Ascending aorta (tissue), 2 donors: ENCODE measurements at regions of chr18 and their contacts with region 1.

Region 1: DNA sequence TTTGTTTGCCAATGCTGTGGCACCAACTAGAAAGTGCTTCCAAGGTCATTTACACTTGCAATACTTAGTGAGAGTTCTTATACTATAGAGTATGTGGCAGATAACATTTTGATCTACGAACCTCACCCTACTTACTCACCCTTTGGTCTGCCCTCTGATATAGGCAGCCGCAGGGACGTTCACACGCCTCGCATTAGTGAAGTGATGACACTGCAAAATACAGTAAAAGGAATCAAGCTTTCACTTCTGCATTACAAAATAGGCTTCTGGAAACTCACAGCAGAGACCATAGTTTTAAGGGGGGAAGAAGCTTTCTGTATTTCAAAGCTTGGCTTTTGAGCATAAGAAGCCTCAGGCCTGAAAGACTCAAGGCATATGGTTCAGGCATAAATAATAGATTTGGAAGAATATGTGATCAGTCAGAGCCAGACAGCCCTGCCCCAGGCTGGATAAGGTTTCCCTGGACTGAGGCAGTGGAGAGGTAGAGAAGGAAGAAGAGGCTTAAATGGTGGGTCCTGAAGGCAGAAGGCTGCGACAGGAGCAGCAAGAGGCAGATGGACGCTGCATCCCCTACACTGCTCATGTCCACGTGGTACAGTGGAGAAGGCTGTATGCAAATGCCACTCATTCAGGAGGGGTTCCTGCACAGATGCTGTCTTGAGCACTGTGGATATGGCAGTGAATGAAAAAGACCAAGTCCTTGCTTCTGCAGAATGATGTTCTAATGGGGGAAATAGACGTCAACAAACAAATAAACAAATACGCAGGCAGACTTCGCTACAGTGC is 63.1 kb downstream of the FECH start:
- DNase-seq: no peak
- H3K4me3 ChIP-seq: no peak overlapping the region
- H3K27ac ChIP-seq: no peak overlapping the region
- H3K4me1 ChIP-seq: no peaks in the 10 kb centered on the region
- H3K27me3 ChIP-seq: no peaks in the 10 kb centered on the region
- CTCF ChIP-seq: no peak

Region 2: GRCh38 chr18:57121542-57122112 is 401.7 kb before region 1 on chr18:
- intact Hi-C with region 1: no loop called
- DNase-seq: no peak
- H3K4me3 ChIP-seq: no peak overlapping the region
- H3K27ac ChIP-seq: no peak overlapping the region
- H3K4me1 ChIP-seq: no peaks in the 10 kb centered on the region
- H3K27me3 ChIP-seq: no peaks in the 10 kb centered on the region
- CTCF ChIP-seq: no peak

Region 3: DNA sequence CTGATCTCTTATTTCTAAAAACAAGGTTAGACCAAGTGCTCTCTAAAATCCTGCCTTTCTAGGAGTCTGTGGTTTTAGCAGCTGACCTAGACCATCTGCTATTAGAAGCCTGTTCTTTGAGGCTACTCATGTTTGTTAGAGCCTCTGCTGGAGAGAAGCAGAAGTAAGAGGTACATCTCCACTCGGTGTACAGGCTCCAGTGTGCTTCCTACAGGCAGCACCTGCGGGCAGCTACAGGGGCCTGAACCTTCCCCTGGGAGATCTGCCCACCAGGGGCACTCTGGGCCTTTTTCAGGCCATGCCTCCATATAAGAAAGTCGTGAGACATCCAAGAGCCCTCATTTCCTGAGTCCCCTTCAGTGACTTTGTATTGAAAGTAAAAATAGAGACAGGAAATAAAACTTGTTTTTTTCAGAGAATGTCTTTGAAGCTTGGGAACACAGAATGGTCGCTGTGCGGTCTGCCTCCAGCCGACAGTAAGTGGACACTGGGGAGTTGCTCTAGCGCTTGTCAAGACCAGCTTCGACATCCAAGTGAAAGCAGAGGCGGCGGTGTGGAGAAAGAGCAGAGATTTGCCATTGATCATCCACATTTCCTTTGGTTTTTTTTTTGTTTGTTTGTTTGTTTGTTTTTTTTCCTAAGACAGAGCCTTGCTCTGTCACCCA is 56.5 kb before region 1 on chr18:
- intact Hi-C with region 1: loop called (anchors 10 kb)
- DNase-seq: no peak
- H3K4me3 ChIP-seq: no peak overlapping the region
- H3K27ac ChIP-seq: no peak overlapping the region
- H3K4me1 ChIP-seq: peaks cover 0 to 9% of the 10 kb centered on the region in 2 donors
- H3K27me3 ChIP-seq: no peaks in the 10 kb centered on the region
- CTCF ChIP-seq: no peak

Region 4: DNA sequence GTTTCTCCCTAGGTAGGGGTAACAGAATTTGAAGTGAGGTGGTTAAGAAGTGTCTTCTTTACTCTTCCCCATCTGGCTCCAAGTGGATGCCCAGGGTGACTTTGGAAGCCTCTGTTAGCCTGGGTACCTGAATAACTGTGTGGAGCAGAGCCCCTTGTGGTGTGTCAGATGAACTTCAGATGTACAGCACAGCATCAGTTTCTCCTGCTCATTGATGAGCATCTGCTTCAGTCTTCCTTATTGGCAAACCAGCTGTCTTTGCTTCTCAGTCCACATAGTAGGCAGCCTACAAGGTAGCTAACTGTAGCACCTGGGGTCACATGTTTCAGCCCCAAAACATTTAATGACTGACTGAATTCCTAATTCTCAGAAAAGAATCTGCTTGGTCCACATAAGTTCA is 335.9 kb after region 1 on chr18:
- intact Hi-C with region 1: no loop called
- DNase-seq: no peak
- H3K4me3 ChIP-seq: no peak overlapping the region
- H3K27ac ChIP-seq: no peak overlapping the region
- H3K4me1 ChIP-seq: no peaks in the 10 kb centered on the region
- H3K27me3 ChIP-seq: no peaks in the 10 kb centered on the region
- CTCF ChIP-seq: peak in 1 of 3 experiments; percentile 19